Naive thymus-derived CD4-positive, alpha-beta T cell (primary cell): ENCODE measurements at regions of chr19 and their contacts with region 1.

Region 1: GRCh38 chr19:34772697-34773554 is at the start of gene ZNF599:
- DNase-seq: peak; percentile 72 to 89 (median 87)
- ATAC-seq: peak; percentile 99
- H3K4me3 ChIP-seq: peak within 1 kb of the TSS; percentile 88
- H3K4me3 Mint-ChIP-seq: peak within 1 kb of the TSS; percentile 92 to 99 (median 96)
- H3K27ac ChIP-seq: peak within 1 kb of the TSS; percentile 81
- H3K27ac Mint-ChIP-seq: peak within 1 kb of the TSS; percentile 84 to 97 (median 95)
- H3K4me1 ChIP-seq: peaks cover 7 to 10% of the 10 kb centered on the region in 2 donors
- H3K4me1 Mint-ChIP-seq: peaks cover 13 to 21% (median 20%) of the 10 kb centered on the region in 7 donors
- H3K27me3 ChIP-seq: no peaks in the 10 kb centered on the region
- H3K27me3 Mint-ChIP-seq: peaks cover 0 to 15% (median 5%) of the 10 kb centered on the region in 5 donors
- total RNA-seq, gene ZNF599: 2.9 to 11.6 (median 5.3) TPM

Region 2: DNA sequence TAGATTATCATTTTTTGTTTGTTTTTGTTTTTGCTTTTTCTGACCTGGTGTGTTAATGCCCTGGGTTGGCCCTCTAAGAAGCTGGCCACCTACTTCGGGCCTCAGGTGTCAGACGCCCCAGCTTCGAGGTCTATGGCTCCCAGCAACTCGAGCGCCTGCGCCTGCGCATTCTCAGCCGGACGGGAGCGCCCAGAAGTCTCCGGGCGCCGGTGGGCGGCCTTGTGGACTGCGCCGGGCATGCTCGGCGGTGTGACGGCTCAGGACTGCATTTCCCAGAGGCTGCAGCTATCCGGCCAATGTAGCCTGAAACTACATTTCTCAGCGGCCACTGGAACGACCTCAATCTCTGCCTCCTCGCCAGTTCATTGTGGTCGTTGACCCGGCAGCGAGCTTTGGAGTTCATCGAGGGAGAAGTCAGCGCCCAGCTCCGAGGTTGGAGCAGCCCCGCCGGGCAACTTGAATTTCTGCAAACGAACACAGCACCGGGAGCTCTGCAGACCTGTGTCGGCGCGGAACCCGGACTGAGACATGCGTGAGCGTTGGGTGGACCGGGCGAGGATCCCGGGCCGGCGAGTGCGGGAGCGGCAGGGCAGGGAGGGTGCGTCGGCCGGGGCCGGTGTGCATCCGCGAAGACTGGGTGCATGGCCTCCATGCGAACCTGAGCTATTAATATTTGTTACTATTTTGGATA is 153.9 kb after region 1 on chr19 and contains the start of gene ZNF30:
- CTCF ChIA-PET with region 1: no interaction called
- POLR2A ChIA-PET with region 1: no interaction called
- intact Hi-C with region 1: loop called (anchors 2 to 10 kb)
- DNase-seq: peak; percentile 57 to 78 (median 74)
- ATAC-seq: peak; percentile 95
- H3K4me3 ChIP-seq: peak within 1 kb of the TSS; percentile 76
- H3K4me3 Mint-ChIP-seq: peak within 1 kb of the TSS; percentile 84 to 95 (median 92)
- H3K27ac ChIP-seq: peak within 1 kb of the TSS; percentile 61
- H3K27ac Mint-ChIP-seq: peak within 1 kb of the TSS; percentile 49 to 84 (median 72)
- H3K4me1 ChIP-seq: peaks cover 0 to 5% of the 10 kb centered on the region in 2 donors
- H3K4me1 Mint-ChIP-seq: peaks cover 10 to 34% (median 23%) of the 10 kb centered on the region in 7 donors
- H3K27me3 ChIP-seq: no peaks in the 10 kb centered on the region
- H3K27me3 Mint-ChIP-seq: peaks cover 0 to 6% (median 0%) of the 10 kb centered on the region in 5 donors
- total RNA-seq, gene ZNF30: 2.0 to 13.1 (median 3.5) TPM

Region 3: GRCh38 chr19:35002037-35002535 is 229.2 kb after region 1 on chr19:
- CTCF ChIA-PET with region 1: no interaction called
- POLR2A ChIA-PET with region 1: no interaction called
- intact Hi-C with region 1: no loop called
- DNase-seq: no peak
- ATAC-seq: no peak
- H3K4me3 ChIP-seq: peak overlapping the region; percentile 72
- H3K4me3 Mint-ChIP-seq: peak overlapping the region; percentile 94 to 100 (median 98)
- H3K27ac ChIP-seq: peak overlapping the region; percentile 97
- H3K27ac Mint-ChIP-seq: peak overlapping the region; percentile 94 to 100 (median 97)
- H3K4me1 ChIP-seq: peaks cover 50 to 56% of the 10 kb centered on the region in 2 donors
- H3K4me1 Mint-ChIP-seq: peaks cover 57 to 82% (median 71%) of the 10 kb centered on the region in 7 donors
- H3K27me3 ChIP-seq: no peaks in the 10 kb centered on the region
- H3K27me3 Mint-ChIP-seq: no peaks in the 10 kb centered on the region